ENCODE measurements at regions of chr20 and their contacts with region 1.

Region 1: DNA sequence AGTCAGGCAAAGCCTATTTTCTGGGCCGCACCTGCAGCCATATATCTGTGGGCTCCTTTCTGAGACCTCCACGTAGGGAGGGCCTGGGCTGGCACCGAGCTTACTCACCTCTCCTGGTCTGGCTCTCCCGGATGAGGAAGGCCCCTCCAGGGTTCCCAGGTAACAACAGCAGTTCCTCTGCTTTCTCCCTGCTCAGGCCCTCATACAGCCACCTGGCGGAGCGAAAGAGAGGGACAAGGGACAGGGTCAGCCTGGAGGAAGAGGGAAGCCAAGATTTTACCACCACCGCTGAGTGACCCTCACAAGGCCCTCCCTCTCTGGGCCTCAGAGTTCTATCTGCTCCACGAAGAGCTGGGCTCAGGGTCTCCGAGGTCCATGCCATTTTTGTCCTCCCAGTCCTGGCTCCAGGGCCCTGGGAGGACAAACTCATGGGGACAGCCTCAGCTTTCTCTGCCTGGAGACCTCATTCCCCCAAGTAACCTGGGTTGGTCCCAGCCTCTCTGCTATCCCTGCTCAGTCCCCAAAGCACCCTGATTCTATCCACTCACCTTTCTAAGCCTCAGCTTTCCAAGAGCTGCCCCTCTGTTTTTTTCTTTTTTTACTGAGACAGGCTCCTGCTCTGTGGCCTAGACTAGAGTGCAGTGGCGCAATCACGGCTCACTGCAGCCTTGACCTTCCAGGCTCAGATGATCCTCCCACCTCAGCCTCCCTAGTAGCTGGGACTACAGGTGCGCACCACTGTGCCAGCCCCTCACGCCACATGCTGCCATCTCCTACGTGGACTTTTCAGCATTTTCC is 13.3 kb downstream of the SLA2 start:
- DNase-seq: no peak
- ATAC-seq: no peak
- H3K4me3 ChIP-seq: no peak overlapping the region
- H3K4me3 Mint-ChIP-seq: no peak overlapping the region
- H3K27ac ChIP-seq: no peak overlapping the region
- H3K27ac Mint-ChIP-seq: no peak overlapping the region
- H3K4me1 ChIP-seq: peaks cover 9 to 11% of the 10 kb centered on the region in 2 donors
- H3K4me1 Mint-ChIP-seq: peaks cover 13% of the 10 kb centered on the region
- H3K27me3 ChIP-seq: no peaks in the 10 kb centered on the region
- H3K27me3 Mint-ChIP-seq: no peaks in the 10 kb centered on the region
- CTCF ChIP-seq: no peak

Region 2: GRCh38 chr20:37111926-37112455 is 479.3 kb after region 1 on chr20:
- CTCF ChIA-PET with region 1: no interaction called
- POLR2A ChIA-PET with region 1: interaction called, 10 read pairs
- intact Hi-C with region 1: no loop called
- DNase-seq: no peak
- ATAC-seq: no peak
- H3K4me3 ChIP-seq: no peak overlapping the region
- H3K4me3 Mint-ChIP-seq: no peak overlapping the region
- H3K27ac ChIP-seq: no peak overlapping the region
- H3K27ac Mint-ChIP-seq: no peak overlapping the region
- H3K4me1 ChIP-seq: no peaks in the 10 kb centered on the region
- H3K4me1 Mint-ChIP-seq: no peaks in the 10 kb centered on the region
- H3K27me3 ChIP-seq: no peaks in the 10 kb centered on the region
- H3K27me3 Mint-ChIP-seq: no peaks in the 10 kb centered on the region
- CTCF ChIP-seq: no peak

Measured in B cell (primary cell).